ENCODE measurements at regions of chr6 and their contacts with region 1.

Region 1: GRCh38 chr6:43629505-43630300 is 639 bp upstream of the GTPBP2 start:
- DNase-seq: peak; percentile 90
- H3K4me3 Mint-ChIP-seq: peak overlapping the region; percentile 100
- H3K27ac Mint-ChIP-seq: peak overlapping the region; percentile 98
- H3K4me1 Mint-ChIP-seq: peaks cover 37% of the 10 kb centered on the region
- H3K27me3 Mint-ChIP-seq: no peaks in the 10 kb centered on the region

Region 2: DNA sequence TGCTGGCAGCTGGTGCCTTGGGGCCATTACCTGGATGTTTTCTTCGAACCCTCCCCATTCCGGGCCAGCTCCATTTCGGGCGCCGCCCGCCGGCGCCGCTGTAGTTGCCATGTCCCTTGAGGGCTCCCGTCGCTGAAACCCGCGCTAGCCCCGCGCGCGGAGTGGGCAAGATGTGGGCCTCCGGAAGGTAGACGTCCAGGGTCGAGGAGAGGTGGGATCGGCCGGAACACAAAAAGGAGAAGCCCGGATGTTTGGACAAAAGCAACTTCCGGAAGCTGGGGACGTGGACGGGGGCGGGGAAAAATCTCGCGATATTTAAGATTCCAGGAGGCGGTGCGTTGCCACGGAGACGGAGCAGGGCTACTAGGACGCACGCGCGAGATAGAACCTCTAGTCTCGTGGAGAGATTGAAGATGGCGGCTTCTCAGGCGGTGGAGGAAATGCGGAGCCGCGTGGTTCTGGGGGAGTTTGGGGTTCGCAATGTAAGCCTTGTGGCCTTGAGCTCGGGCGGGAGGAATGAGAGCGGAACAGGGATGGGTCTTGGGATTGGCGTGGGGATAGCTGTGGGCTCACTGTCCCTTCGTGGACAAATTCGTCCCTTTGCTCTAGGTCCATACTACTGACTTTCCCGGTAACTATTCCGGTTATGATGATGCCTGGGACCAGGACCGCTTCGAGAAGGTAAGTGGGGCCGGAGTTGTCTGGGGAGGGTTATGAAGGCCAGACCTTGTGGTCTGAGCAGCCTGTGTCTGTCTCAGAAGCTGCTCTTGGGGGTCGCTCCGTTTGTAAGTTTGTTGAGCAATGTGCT is 112.8 kb before region 1 on chr6 and contains the starts of genes POLR1C and YIPF3:
- intact Hi-C with region 1: loop called (anchors 1 kb)
- DNase-seq: peak; percentile 94
- H3K4me3 Mint-ChIP-seq: no peak within 1 kb of the TSS
- H3K27ac Mint-ChIP-seq: no peak within 1 kb of the TSS
- H3K4me1 Mint-ChIP-seq: peaks cover 18% of the 10 kb centered on the region
- H3K27me3 Mint-ChIP-seq: no peaks in the 10 kb centered on the region
- total RNA-seq, gene POLR1C: 60.8 and 63.8 TPM in 2 replicates
- total RNA-seq, gene YIPF3: 51.7 and 59.0 TPM in 2 replicates

Region 3: GRCh38 chr6:43575772-43576551 is 53.7 kb before region 1 on chr6 and contains the starts of genes POLH and XPO5:
- intact Hi-C with region 1: loop called (anchors 2 kb)
- DNase-seq: peak; percentile 88
- H3K4me3 Mint-ChIP-seq: peak within 1 kb of the TSS; percentile 91
- H3K27ac Mint-ChIP-seq: peak within 1 kb of the TSS; percentile 91
- H3K4me1 Mint-ChIP-seq: peaks cover 44% of the 10 kb centered on the region
- H3K27me3 Mint-ChIP-seq: no peaks in the 10 kb centered on the region
- total RNA-seq, gene POLH: 35.7 and 44.5 TPM in 2 replicates
- total RNA-seq, gene XPO5: 114 and 119 TPM in 2 replicates

Region 4: DNA sequence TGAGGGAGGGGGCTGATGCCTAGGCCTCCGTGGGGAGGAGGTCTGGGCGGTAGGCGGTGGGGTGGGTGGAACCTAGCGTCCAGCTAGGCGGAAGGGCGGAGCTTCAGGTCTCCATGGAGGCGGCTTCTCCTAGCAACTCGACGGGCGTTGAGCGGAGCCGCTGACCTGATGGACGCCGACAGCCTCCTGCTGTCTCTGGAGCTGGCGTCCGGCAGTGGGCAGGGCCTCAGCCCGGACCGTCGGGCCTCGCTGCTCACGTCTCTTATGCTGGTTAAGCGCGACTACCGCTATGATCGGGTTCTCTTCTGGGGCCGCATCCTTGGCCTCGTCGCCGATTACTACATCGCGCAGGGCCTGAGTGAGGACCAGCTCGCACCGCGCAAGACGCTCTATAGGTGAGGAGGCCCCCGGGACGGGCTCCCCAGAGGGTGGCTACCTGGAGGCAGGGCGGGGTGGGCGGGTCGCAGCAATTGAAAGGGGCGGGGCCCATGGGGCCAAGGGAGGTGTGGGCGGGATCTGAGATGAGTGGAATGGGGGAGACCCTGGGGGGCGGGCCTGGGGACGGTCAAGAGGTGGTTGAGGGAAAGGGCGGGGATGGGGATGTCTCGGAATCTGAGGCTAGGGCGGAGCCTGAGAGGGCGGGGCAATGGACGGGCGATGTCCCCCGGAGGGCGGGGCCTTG is 15.4 kb after region 1 on chr6 and contains the start of gene RSPH9:
- intact Hi-C with region 1: loop called (anchors 2 kb)
- DNase-seq: peak; percentile 64
- H3K4me3 Mint-ChIP-seq: peak within 1 kb of the TSS; percentile 83
- H3K27ac Mint-ChIP-seq: no peak within 1 kb of the TSS
- H3K4me1 Mint-ChIP-seq: peaks cover 18% of the 10 kb centered on the region
- H3K27me3 Mint-ChIP-seq: no peaks in the 10 kb centered on the region
- total RNA-seq, gene RSPH9: not detected in 2 replicates

Region 5: DNA sequence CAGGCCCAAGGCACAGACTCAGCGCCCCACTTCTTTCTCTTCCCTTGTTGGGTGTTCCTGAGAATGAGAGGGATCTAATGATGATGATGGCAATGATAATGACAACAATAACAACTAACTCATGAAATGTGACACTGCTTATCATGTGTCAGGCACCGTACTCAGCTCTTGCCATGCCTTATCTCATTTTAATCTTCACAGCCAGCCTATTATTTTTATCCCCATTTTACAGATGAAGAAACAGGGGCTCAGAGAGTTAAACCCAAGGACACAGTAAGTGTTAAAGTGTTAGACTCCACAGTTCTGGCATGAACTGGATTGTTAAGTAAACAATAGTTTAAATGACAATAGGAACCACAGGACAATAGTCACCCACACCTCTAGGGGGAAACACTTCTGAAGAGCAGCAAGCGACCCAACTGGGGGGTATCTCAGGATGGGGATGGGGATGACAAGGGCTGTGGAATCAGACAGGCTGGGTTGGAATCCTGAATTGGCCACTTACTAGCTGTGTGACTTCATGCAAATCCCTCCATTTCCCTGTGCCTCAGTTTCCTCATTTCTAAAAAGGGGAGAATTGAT is 27.6 kb after region 1 on chr6:
- intact Hi-C with region 1: no loop called
- DNase-seq: no peak
- H3K4me3 Mint-ChIP-seq: no peak overlapping the region
- H3K27ac Mint-ChIP-seq: no peak overlapping the region
- H3K4me1 Mint-ChIP-seq: peaks cover 6% of the 10 kb centered on the region
- H3K27me3 Mint-ChIP-seq: no peaks in the 10 kb centered on the region

Region 6: DNA sequence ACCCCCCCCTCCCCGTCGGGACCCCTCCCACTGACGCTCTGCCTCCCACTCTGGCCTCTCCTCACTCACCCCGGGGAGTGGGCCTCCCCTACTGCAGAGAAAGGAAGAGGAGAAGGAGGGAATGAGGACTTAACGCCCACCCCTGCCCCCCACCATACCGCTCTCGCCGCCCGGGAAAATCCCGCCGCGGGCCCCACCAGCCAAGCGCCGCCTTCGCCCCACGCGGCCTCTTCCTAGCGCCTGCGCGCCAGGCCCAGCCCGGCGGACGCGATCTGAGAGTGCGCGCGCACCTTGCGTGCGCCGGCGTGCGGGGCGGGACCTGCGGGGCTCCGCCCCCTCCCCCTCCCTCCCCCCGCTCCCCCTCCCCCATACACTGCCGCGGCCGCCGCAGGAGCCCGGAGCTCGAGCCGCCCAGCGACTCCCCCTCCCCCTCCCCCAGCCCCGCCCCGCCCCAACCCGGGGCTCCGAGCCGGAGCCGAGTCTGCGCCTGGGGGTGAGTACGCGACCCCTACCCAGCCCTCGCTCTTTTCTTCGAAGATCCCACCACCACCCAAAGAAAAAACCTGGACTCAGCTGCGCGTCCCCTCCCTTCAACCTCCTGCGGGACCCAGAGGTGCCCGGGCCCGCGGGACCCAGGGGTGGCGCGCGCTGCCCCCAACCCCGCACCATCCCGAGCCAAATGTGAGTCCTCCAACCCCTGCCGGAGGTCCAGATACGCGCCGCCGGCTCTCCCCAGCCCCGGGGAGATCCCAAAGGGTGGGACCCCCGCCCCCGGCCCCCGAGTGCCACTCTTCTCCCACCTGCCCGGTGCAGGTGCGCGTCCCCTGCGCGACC is 497.7 kb after region 1 on chr6 and contains the starts of genes MRPL14 and TMEM63B:
- intact Hi-C with region 1: loop called (anchors 2 kb)
- DNase-seq: peak; percentile 86
- H3K4me3 Mint-ChIP-seq: peak within 1 kb of the TSS; percentile 85
- H3K27ac Mint-ChIP-seq: peak within 1 kb of the TSS; percentile 93
- H3K4me1 Mint-ChIP-seq: peaks cover 43% of the 10 kb centered on the region
- H3K27me3 Mint-ChIP-seq: no peaks in the 10 kb centered on the region
- total RNA-seq, gene MRPL14: 67.3 and 70.3 TPM in 2 replicates
- total RNA-seq, gene TMEM63B: 20.3 and 23.6 TPM in 2 replicates